Activated CD8-positive, alpha-beta T cell treated with anti-CD3 and anti-CD28 coated beads, Interleukin-2, amount 10 ng/mL, durations not matched to agents 7 days and 5 days (primary cell): ENCODE measurements at regions of chr16 and their contacts with region 1.

Region 1: DNA sequence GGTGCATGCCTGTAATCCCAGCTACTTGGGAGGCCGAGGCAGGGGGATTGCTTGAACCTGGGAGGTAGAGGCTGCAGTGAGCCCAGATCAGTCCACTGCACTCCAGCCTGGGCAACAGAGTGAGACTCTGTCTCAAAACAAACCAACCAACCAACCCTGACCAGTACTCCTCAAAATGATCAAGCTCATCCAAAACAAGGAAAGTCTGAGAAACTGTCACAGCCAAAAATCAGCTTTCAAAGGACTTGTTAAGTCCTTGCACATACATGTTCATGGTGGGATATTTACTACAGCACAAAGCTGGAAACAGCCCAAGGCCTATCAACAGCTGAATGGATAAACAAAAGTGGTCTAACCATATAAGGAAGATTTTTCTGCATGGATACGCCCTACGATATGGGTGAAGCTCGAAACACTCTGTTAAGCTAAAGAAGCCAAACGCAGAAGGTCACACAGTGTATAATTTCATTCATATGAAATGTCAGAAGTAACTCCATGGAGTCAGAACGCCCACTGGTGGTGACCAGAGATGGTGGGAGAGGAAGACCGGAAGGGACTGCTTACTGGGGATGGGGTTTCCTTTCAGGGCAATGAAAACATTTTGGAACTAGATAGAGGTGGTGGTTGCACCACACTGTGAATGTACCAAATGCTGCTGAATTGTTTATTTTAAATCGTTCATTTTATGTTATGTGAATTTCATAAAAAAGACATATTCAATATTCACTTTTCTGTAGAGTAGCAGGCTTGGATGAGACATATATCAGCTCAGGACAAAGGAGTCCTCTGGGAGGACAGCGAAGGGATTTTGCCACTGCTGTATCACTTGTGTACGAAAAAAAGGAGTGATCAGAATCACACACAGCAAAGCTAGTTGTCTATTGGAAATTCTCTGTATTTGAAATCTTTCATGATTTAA is 17.7 kb downstream of the CCL17 start:
- DNase-seq: no peak
- ATAC-seq: no peak
- H3K4me3 Mint-ChIP-seq: no peak overlapping the region
- H3K27ac Mint-ChIP-seq: no peak overlapping the region
- H3K4me1 Mint-ChIP-seq: peaks cover 18% of the 10 kb centered on the region
- H3K27me3 Mint-ChIP-seq: no peaks in the 10 kb centered on the region

Region 2: DNA sequence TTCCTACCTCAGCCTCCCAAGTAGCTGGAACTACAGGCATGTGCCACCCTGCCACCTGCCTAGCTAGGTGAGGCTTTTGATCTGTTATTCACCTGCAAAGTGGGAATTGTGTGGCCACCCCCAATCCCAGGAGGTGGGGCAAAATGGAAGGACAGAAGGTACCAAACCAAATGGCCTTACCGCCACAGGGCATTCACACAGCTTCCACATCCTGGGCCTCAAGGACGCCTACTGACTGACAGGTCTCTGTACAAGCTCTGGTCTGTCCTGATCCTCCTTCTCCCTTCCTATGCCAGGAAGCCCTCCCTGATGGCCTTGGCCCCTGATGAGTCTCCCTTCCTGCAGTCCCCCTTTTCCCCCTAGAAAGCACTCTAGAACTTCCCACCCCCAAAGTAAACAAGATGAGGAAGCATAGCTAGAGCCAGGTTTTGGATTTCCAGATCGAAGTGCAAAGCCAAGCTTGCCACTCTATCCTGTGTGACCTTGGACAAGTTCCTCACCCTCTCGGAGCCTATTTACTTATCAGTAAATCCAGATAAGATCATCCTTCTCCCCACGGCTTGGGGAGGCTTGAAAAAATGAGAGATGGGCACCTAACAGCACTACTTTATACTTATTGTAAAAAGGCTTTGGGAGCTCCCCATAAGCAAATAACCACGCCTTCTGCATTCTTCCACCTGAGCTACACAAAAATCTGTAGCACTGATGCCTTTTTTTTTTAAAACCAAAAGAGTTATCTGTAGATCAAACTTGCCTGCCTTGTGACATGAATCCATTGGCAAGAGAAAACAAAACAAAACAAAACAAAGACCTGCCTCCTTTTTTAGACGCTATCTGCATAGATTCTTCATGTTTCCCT is 142.3 kb before region 1 on chr16:
- CTCF ChIA-PET with region 1: interaction called, 11 read pairs
- POLR2A ChIA-PET with region 1: no interaction called
- DNase-seq: no peak
- ATAC-seq: no peak
- H3K4me3 Mint-ChIP-seq: no peak overlapping the region
- H3K27ac Mint-ChIP-seq: peak overlapping the region; percentile 11
- H3K4me1 Mint-ChIP-seq: peaks cover 43% of the 10 kb centered on the region
- H3K27me3 Mint-ChIP-seq: peaks cover 25% of the 10 kb centered on the region

Region 3: GRCh38 chr16:57300387-57301125 is 121.7 kb before region 1 on chr16:
- CTCF ChIA-PET with region 1: interaction called, 338 read pairs
- POLR2A ChIA-PET with region 1: interaction called, 20 read pairs
- DNase-seq: peak; percentile 99
- ATAC-seq: peak; percentile 91
- H3K4me3 Mint-ChIP-seq: no peak overlapping the region
- H3K27ac Mint-ChIP-seq: no peak overlapping the region
- H3K4me1 Mint-ChIP-seq: peaks cover 41% of the 10 kb centered on the region
- H3K27me3 Mint-ChIP-seq: peaks cover 5% of the 10 kb centered on the region

Region 4: GRCh38 chr16:57432989-57433388 is 10.7 kb after region 1 on chr16:
- CTCF ChIA-PET with region 1: interaction called, 17 read pairs
- POLR2A ChIA-PET with region 1: no interaction called
- DNase-seq: no peak
- ATAC-seq: no peak
- H3K4me3 Mint-ChIP-seq: no peak overlapping the region
- H3K27ac Mint-ChIP-seq: peak overlapping the region; percentile 18
- H3K4me1 Mint-ChIP-seq: peaks cover 12% of the 10 kb centered on the region
- H3K27me3 Mint-ChIP-seq: no peaks in the 10 kb centered on the region